ENCODE measurements at regions of chr15 and their contacts with region 1.

Region 1: GRCh38 chr15:74373731-74374647 is 6.5 kb upstream of the CYP11A1 start:
- DNase-seq: peak; percentile 81 to 93 (median 87)
- H3K4me3 ChIP-seq: peak overlapping the region; percentile 48 to 91 (median 72)
- H3K27ac ChIP-seq: peak overlapping the region in 12 of 59 donors; percentile 6 to 69 (median 32)
- H3K27me3 ChIP-seq: no peaks in the 10 kb centered on the region
- CTCF ChIP-seq: peak; percentile 36 to 97 (median 90)

Region 2: GRCh38 chr15:74433592-74434262 is 59.7 kb after region 1 on chr15 and contains the start of gene SEMA7A:
- intact Hi-C with region 1: no loop called
- DNase-seq: peak; percentile 77 to 93 (median 86)
- H3K4me3 ChIP-seq: peak within 1 kb of the TSS; percentile 68 to 98 (median 88)
- H3K27ac ChIP-seq: peak within 1 kb of the TSS; percentile 78 to 100 (median 95)
- H3K27me3 ChIP-seq: no peaks in the 10 kb centered on the region
- CTCF ChIP-seq: peak in 33 of 56 donors; percentile 7 to 68 (median 24)
- total RNA-seq, gene SEMA7A: 34.1 to 116 (median 63.6) TPM

Region 3: DNA sequence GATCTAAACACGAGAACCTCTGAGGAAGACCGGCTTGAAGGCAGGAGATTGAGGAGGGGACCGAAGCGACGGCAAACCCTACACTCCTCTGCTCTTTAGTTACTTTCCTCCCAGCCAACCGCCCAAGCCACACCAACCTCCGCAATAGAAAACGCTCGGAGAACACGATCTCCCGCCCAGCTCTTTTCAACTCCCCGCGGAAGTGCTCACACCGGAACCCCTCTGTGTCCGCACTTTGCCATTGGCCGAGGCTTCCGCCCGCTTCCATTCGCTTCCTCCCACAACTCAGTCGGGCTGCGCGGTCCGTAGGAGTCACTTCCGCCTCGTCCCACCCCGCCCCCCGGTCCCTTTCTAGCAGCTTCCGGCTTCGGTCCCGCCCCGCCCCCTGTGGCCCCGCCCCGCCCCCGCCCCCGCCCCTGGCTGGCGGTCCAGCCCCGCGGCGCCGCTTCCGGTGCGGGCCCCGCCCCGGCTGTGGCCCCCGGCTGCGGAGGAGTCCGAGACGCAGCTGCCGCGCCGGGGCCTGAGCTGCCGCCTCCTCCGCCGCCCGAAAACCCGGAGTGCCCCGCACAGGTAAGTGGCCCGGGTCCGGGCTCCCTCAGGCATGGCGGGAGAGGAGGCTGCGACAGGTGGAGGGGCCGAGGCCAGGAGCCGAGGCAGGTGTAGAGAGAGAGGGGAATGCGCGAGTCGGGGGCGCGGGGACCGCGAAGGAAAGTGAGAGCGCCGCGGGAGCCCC is 166.9 kb after region 1 on chr15 and contains the start of gene ARID3B:
- intact Hi-C with region 1: loop called in 1 of 2 experiments (anchors 5 kb)
- DNase-seq: peak; percentile 93 to 97 (median 96)
- H3K4me3 ChIP-seq: peak within 1 kb of the TSS; percentile 49 to 98 (median 87)
- H3K27ac ChIP-seq: peak within 1 kb of the TSS in 51 of 59 donors; percentile 6 to 94 (median 79)
- H3K27me3 ChIP-seq: no peaks in the 10 kb centered on the region
- CTCF ChIP-seq: peak in 21 of 56 donors; percentile 8 to 47 (median 23)
- total RNA-seq, gene ARID3B: 2.4 to 9.2 (median 5.6) TPM

Region 4: GRCh38 chr15:74635228-74635627 is 261.2 kb after region 1 on chr15:
- intact Hi-C with region 1: loop called in 1 of 2 experiments (anchors 1 kb)
- DNase-seq: peak in 8 of 10 donors; percentile 55 to 81 (median 72)
- H3K4me3 ChIP-seq: no peak overlapping the region
- H3K27ac ChIP-seq: peak overlapping the region in 1 of 59 donors; percentile 44
- H3K27me3 ChIP-seq: no peaks in the 10 kb centered on the region
- CTCF ChIP-seq: peak; percentile 61 to 97 (median 91)

Region 5: DNA sequence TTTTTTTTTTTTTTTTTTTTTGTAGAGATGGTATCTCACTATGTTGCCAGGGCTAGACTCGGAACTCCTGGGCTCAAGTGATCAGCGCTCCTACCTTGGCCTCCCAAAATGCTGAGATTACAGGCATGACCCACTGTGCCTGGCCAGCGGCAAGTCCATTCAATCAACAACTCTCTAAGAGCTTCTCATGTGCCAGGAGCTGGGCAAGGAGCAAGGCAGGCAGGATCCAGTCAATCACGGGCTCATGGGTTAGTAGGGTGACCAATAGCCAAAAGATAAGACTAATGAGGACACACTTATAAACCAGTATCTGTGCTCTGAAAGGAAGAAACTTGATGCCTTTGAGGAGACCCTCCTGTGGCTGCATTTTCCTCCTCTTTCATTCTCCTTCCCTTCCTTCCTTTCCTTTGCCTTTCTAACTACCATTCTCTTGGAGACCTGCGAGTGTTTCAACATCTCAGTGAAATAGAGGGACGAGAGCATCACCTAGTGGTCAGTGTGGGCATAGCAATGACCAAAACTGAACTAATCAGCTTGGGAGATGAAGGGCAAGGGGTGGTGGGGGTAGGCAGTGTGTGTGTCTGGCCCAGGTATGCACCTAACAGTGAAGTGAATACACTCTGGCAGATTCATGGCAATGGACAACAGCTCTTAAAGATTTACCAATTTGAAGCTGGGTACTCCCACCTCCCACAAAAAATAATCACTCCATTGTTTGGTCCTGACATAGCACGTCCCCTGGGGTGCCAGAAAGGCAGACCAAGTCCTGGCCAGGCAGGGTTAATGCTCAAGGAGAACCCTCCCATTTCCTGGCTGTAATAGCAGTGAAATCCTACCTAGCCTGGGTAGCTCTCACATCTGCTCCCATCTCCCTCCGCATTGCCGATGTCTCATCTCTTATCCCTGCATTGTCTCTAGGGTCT is 576.4 kb after region 1 on chr15:
- intact Hi-C with region 1: loop called (anchors 5 to 10 kb)
- DNase-seq: peak; percentile 53 to 90 (median 68)
- H3K4me3 ChIP-seq: peak overlapping the region in 1 of 59 donors; percentile 6
- H3K27ac ChIP-seq: peak overlapping the region in 6 of 59 donors; percentile 1 to 50 (median 37)
- H3K27me3 ChIP-seq: no peaks in the 10 kb centered on the region
- CTCF ChIP-seq: peak; percentile 89 to 99 (median 95)